AG04449 (cell line): ENCODE measurements at regions of chr3 and their contacts with region 1.

Region 1: GRCh38 chr3:16048435-16049318 is 125.8 kb upstream of the GALNT15 start:
- DNase-seq: no peak
- H3K4me3 ChIP-seq: no peak overlapping the region
- CTCF ChIP-seq: peak; percentile 60

Region 2: GRCh38 chr3:15768421-15769255 is 280.0 kb before region 1 on chr3:
- CTCF ChIA-PET with region 1: no interaction called
- POLR2A ChIA-PET with region 1: no interaction called
- DNase-seq: peak; percentile 94
- H3K4me3 ChIP-seq: no peak overlapping the region
- CTCF ChIP-seq: no peak

Region 3: DNA sequence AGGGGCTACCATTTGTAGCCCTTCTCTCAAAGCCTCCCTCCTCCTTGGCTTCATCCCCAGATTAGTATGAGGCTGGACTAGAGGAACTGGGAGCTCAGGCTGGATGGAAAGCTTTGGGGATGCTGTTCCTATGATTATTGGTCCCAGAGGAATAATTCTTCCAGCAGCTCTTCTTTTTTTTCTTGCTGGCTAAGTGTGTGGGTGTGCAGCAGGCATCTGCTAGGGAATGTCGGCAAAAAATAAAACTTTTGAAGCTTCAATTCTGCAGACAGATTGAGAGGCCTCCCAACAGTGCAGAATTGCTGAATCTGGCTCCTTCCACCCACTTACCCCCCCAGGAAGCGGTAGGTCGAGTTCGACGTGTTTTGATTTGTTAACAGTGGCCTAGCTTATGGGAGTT is 112.4 kb before region 1 on chr3:
- CTCF ChIA-PET with region 1: no interaction called
- POLR2A ChIA-PET with region 1: no interaction called
- DNase-seq: no peak
- H3K4me3 ChIP-seq: no peak overlapping the region
- CTCF ChIP-seq: no peak

Region 4: GRCh38 chr3:16060358-16060852 is 11.7 kb after region 1 on chr3:
- CTCF ChIA-PET with region 1: interaction called, 75 read pairs
- POLR2A ChIA-PET with region 1: interaction called, 3 read pairs
- DNase-seq: peak; percentile 100
- H3K4me3 ChIP-seq: no peak overlapping the region
- CTCF ChIP-seq: peak; percentile 38

Region 5: DNA sequence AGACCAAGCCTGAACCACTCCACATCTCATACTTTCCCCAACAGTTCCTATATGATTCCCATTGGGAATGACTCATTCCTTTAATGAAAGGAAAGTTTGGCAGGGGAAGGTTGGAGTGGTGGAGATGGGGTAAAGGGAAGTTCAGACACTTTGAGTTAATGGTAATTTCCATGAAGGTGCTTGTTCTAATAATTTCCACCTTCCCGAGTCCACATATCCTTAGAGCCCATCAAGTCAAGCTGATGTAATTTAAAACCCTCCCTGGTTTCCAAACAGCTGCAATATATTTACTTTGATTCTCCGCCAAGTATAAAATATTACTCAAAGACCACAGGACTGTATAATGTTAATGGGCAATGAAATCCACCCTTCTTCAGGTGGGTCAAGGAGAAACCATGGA is 30.8 kb after region 1 on chr3:
- CTCF ChIA-PET with region 1: interaction called, 23 read pairs
- POLR2A ChIA-PET with region 1: interaction called, 3 read pairs
- DNase-seq: no peak
- H3K4me3 ChIP-seq: no peak overlapping the region
- CTCF ChIP-seq: no peak

Region 6: DNA sequence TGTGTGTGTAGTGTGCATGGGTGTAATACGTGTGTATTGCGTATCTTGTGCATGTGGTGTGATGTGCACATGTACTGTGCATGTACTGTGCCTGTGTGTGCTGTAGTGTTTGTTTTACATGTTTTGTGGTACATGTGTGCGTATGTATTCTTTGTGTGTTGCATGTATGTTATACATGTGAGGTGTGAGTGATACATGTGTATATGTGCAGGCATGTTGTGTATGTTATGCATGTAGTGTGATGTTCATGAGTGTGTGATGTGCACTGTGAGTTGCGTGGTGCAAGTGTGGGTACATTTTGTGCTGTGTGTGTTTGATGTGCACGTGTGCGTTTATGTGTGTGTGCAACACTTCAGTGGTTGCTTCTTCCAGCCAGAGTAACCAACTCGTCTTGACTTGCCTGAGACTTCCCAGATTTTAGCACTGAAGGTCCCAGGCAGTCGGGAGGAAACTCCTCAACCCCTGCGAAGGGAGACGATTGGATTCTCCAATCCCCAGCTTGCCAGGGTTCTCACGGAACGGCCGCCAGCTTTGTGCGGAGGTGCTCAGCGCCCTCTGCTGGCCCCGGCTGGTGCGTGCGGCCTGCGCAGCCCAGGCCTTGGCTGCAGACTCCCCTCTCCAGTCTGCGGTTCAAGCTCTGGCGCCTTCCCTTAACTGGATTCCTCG is 129.4 kb after region 1 on chr3:
- CTCF ChIA-PET with region 1: interaction called, 364 read pairs
- POLR2A ChIA-PET with region 1: no interaction called
- DNase-seq: no peak
- H3K4me3 ChIP-seq: peak overlapping the region; percentile 65
- CTCF ChIP-seq: peak; percentile 100

Region 7: DNA sequence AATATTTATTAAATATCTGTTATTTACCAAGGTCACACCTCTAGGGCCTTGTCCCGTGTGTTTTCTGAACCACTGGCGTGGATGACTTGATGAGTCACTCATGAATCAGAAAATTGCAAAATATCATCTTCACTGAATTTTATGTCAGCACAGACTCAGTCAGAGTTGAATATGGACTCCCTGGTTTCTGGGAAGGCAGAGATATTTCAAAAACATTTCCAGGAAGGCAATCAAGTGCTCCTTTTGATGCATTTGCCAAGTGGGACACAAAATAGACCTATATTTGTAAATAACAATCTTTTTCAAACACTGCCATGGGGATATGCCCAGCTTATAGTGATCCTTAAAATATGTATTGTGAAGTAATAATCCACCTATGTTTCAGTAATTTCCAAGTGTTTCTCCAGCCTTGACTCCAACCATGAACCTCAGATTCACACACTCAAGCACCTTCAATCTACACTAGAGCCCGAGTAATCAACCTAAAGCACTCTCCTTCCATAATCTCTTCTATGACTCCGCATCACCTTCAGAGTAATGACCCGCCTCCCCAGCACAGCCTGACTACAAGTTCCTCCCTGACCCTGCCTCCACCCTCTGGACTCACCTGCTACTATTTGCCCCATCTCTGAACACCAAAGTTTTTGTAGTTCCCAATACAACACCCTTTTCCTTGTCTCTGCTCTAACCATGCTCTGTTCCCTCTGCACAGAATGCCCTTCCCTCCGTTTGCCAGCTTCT is 191.8 kb after region 1 on chr3:
- CTCF ChIA-PET with region 1: interaction called, 86 read pairs
- POLR2A ChIA-PET with region 1: no interaction called
- DNase-seq: peak; percentile 34
- H3K4me3 ChIP-seq: no peak overlapping the region
- CTCF ChIP-seq: no peak

Region 8: GRCh38 chr3:16382845-16383244 is 334.2 kb after region 1 on chr3:
- CTCF ChIA-PET with region 1: no interaction called
- POLR2A ChIA-PET with region 1: no interaction called
- DNase-seq: no peak
- H3K4me3 ChIP-seq: no peak overlapping the region
- CTCF ChIP-seq: no peak